Posterior cingulate gyrus (tissue), 11 donors: ENCODE measurements at regions of chr9 and their contacts with region 1.

Region 1: GRCh38 chr9:97900738-97901565 is 21.3 kb downstream of the TRMO start:
- DNase-seq: peak in 1 of 10 donors; percentile 20

Region 2: DNA sequence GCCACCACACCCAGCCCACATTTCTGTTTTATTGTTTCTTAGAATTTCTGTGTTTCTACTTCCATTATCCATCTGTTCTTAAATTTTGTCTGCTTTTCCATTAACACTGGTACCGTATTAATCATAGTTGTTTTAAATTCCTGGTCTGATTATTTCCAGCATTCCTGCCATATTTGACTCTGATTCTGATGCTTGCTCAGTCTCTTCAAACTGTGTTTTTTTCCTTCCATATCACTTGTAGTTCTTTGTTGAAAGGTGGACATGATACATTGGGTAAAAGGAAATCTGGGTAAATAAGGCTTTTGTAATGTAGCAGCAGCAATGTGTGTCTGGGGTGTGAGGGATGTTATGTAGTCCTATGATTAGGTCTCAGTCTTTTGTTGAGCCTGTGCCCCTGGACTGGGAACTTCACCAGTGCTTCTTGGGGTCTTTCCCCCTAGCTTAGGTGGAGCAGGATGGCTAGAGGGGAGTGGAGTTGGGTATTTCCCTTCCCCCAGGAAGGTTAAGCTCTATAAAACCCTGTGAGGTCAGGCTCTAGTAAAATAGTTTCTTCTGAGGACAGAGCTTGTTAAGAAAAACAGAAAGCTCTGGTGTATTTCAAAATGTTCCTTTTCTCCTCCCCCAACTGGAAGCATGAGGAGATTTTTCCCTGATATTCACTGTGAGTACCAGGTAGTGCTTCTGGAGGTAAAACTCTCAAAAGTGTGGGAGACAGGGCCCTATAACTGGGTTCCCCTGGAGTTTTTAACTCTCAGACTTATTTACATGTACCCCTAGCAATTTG is 409.5 kb before region 1 on chr9:
- intact Hi-C with region 1: no loop called
- DNase-seq: no peak

Region 3: GRCh38 chr9:97710356-97711222 is 190.4 kb before region 1 on chr9:
- intact Hi-C with region 1: loop called (anchors 1 kb)
- DNase-seq: peak in 4 of 10 donors; percentile 21 to 42 (median 27)

Region 4: DNA sequence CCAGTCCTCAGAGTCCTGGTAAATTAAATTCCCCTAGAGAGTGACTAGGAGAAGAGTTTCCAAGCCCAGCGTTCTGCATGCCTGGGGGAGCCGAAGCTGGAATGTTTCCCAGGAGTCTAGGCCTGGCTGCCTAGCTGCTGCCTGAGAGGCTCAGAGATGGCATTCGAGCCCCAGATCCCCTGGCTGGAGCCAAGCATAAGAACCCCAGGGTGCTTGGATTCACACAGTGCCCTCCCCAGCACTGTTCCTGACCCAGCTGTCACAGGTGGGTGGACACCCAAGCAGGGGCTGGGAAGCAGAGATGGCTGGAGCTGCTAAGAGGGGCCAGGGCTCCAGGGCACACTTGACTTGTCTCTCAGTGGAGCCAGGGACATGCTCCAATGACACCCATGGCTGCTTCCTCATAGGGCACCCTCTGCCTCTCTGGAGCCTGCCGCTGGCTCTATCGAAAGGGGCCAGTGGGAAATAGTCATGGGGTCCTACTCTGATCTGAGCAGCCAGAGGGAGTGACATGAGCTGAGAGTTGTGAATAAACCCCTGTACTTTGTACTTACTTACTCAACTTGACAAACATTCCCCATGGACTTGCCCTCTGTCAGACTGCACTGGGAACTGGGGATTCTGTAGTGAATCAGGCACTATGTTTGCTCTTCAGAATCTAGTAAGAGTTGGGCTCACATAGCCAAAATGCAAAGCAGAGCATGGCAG is 141.2 kb before region 1 on chr9:
- intact Hi-C with region 1: no loop called
- DNase-seq: peak in 1 of 10 donors; percentile 21

Region 5: DNA sequence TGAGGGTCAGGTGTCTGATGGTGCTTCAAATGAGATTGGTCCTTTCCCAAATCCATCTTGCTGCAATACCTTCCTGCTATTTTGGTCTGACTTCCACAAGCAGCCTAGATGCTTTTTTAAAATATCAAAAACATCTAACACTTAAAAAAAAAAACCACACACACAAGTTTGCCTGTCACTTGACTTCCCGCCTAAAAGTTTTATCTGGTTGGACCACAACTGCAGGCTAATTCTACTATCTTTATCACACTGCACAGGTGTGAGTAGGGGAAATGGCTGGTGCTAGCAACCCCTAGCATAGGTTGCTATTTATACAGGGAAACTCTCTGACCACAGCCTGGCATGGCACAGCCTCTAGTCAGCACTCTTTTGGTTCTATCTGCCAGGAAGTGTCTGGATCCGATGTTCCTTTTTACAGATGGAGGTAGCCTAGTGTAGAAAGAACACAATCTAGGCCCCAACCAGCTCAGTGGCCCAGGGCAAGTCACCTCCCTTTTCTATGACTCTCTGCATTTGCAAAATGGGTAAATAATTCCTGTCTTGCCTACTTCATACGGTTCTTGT is 37.2 kb after region 1 on chr9 and contains the start of gene HEMGN:
- intact Hi-C with region 1: no loop called
- DNase-seq: no peak